ENCODE measurements at regions of chr1 and their contacts with region 1.

Region 1: DNA sequence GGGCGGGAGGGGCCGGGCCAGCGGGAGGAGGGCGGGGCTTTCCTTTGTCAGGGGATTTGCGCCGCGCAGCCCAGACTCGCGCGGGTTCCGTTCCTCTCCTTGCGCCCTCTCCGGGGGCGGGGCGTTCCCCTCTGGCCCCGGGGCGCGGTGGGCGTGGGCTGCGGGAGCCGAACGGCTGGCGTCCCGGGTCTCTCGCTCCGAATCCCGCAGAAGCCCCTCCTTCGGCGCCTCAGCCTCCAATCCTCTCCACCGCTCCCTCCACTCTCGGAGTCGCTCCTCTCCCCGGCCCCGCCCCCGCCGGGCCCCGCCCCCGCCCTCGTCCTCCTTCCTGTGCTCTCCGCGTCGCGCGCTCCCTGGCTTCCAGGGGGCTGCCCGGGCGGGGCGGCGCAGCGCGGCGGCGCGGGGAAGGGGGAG is 82.8 kb upstream of the BMP8A start:
- DNase-seq: peak; percentile 84
- ATAC-seq: peak; percentile 85
- H3K4me3 Mint-ChIP-seq: peak overlapping the region; percentile 80
- H3K27ac Mint-ChIP-seq: no peak overlapping the region
- H3K4me1 Mint-ChIP-seq: peaks cover 67% of the 10 kb centered on the region
- H3K27me3 Mint-ChIP-seq: no peaks in the 10 kb centered on the region
- CTCF ChIP-seq: no peak

Region 2: GRCh38 chr1:39391691-39392679 is 16.7 kb before region 1 on chr1:
- CTCF ChIA-PET with region 1: interaction called, 34 read pairs
- POLR2A ChIA-PET with region 1: interaction called, 4 read pairs
- intact Hi-C with region 1: no loop called
- DNase-seq: no peak
- ATAC-seq: no peak
- H3K4me3 Mint-ChIP-seq: no peak overlapping the region
- H3K27ac Mint-ChIP-seq: peak overlapping the region; percentile 6
- H3K4me1 Mint-ChIP-seq: peaks cover 59% of the 10 kb centered on the region
- H3K27me3 Mint-ChIP-seq: no peaks in the 10 kb centered on the region
- CTCF ChIP-seq: no peak

Region 3: DNA sequence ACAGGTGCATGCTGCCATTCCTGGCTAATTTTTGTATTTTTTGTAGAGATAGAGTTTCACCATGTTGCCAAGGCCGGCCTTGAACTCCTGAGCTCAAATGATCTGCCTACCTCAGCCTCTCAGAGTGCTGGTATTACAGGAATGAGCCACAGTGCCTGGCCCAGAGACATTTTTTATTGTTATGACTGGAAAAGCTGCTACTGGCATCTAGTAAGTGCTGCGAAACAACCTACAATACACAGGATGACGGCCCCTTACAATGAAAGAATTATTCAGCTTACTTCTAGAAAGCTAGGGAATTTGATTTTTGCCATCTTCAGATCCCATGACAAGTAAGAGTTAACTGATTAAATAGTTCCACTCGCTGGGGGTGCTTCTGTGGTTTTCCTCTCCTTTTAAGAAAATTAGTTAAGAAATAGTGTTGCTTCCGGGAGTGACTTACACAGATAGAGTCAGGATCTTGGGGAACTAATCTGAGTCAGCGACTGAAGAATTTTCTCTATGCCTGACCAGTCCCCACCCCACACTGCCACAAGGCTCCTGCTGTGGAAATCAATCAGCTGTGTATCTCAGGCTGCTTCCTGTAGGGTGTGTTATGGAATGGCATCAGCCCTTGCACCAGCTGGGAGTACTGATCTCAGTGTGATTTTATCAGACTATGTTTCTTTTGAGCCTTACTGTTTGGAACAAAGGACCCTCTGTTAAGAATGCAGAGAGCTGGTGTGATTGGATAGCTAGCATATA is 10.2 kb before region 1 on chr1:
- CTCF ChIA-PET with region 1: interaction called, 44 read pairs
- POLR2A ChIA-PET with region 1: interaction called, 5 read pairs
- intact Hi-C with region 1: no loop called
- DNase-seq: peak; percentile 44
- ATAC-seq: peak; percentile 77
- H3K4me3 Mint-ChIP-seq: no peak overlapping the region
- H3K27ac Mint-ChIP-seq: peak overlapping the region; percentile 58
- H3K4me1 Mint-ChIP-seq: peaks cover 54% of the 10 kb centered on the region
- H3K27me3 Mint-ChIP-seq: no peaks in the 10 kb centered on the region
- CTCF ChIP-seq: no peak

Region 4: DNA sequence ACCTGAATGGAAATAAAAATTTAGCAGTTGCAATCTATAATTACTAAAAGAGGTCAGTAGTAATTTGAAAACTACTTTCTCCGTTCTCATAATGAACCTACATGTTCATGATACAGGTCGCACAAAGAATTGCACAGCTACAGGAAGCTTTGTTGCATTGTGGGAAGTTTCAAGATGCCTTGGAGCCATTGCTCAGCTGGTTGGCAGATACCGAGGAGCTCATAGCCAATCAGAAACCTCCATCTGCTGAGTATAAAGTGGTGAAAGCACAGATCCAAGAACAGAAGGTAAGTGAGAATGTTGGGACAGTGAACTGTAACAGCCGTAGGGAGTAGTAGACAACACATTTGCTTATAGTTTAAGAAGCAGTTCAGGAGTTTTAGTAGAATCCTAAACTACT is 14.0 kb after region 1 on chr1:
- CTCF ChIA-PET with region 1: interaction called, 45 read pairs
- POLR2A ChIA-PET with region 1: interaction called, 4 read pairs
- intact Hi-C with region 1: no loop called
- DNase-seq: no peak
- ATAC-seq: no peak
- H3K4me3 Mint-ChIP-seq: no peak overlapping the region
- H3K27ac Mint-ChIP-seq: peak overlapping the region; percentile 44
- H3K4me1 Mint-ChIP-seq: peaks cover 18% of the 10 kb centered on the region
- H3K27me3 Mint-ChIP-seq: no peaks in the 10 kb centered on the region
- CTCF ChIP-seq: no peak

Region 5: GRCh38 chr1:39434797-39435395 is 26.2 kb after region 1 on chr1:
- CTCF ChIA-PET with region 1: interaction called, 15 read pairs
- POLR2A ChIA-PET with region 1: no interaction called
- intact Hi-C with region 1: no loop called
- DNase-seq: no peak
- ATAC-seq: no peak
- H3K4me3 Mint-ChIP-seq: no peak overlapping the region
- H3K27ac Mint-ChIP-seq: peak overlapping the region; percentile 6
- H3K4me1 Mint-ChIP-seq: peaks cover 3% of the 10 kb centered on the region
- H3K27me3 Mint-ChIP-seq: no peaks in the 10 kb centered on the region
- CTCF ChIP-seq: no peak

Region 6: DNA sequence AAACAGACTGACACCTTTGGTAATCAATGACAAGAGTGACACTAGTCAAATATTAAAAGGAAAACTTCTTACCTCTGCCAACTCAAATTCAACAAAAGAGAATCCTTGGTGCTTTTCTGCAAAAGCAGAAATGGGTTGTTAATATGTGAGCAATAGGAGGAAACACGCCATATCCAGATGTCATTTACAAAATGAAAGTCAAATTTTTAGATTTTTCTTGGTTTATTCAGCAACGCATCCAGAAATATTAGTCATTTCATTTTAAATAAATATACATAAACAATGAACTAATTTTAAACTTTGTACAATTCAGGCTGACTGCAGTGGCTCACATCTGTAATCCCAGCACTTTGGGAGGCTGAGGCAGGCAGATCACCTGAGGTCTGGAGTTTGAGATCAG is 145.6 kb after region 1 on chr1:
- CTCF ChIA-PET with region 1: no interaction called
- POLR2A ChIA-PET with region 1: no interaction called
- intact Hi-C with region 1: no loop called
- DNase-seq: no peak
- ATAC-seq: no peak
- H3K4me3 Mint-ChIP-seq: no peak overlapping the region
- H3K27ac Mint-ChIP-seq: no peak overlapping the region
- H3K4me1 Mint-ChIP-seq: peaks cover 4% of the 10 kb centered on the region
- H3K27me3 Mint-ChIP-seq: no peaks in the 10 kb centered on the region
- CTCF ChIP-seq: no peak